Activated B cell treated with CpG ODN at 0.5 μM for 24 hours (primary cell): ENCODE measurements at regions of chr1 and their contacts with region 1.

Region 1: GRCh38 chr1:93846211-93846991 is 32.6 kb downstream of the DNTTIP2 start:
- DNase-seq: peak; percentile 85
- ATAC-seq: peak; percentile 56
- H3K4me3 Mint-ChIP-seq: peak overlapping the region; percentile 93
- H3K27ac Mint-ChIP-seq: peak overlapping the region; percentile 96
- H3K4me1 Mint-ChIP-seq: peaks cover 24% of the 10 kb centered on the region
- H3K27me3 Mint-ChIP-seq: peaks cover 2% of the 10 kb centered on the region
- CTCF ChIP-seq: no peak

Region 2: DNA sequence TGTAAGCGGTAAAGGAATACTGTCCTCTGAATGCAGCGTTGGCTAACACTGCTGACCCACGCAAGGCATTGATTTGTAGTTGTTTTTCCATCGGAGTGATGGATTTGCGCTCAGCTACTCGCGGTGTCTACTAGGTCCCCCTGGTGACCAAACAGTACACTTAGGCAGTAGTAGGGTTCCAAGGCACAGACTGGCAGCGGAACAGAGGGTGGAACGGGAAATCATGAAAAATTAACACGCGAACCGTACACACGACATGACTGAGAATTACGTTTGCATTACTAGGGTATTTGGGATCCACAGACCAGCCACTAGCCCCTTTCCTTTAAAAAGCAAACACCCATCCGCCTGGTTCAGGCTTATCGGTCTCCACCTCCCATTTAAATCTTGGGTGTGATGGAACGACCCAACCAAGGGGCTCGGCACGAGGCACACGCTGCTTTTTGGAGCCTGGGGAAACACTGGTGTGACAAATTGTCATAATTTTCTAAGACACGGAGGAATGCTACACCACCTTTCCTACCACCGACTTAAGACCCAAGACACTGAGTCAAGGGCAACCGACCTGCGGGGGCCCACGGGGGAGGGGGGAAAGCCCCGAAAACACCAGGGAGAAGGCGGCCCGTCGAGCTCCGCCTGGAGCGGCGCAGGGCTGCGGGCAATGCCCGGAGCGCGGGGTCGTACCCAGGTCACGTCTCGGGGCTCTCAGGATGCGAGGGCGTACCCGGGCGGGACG is 885.8 kb before region 1 on chr1:
- CTCF ChIA-PET with region 1: no interaction called
- POLR2A ChIA-PET with region 1: interaction called, 14 read pairs
- intact Hi-C with region 1: loop called (anchors 5 kb)
- DNase-seq: no peak
- ATAC-seq: peak; percentile 49
- H3K4me3 Mint-ChIP-seq: peak overlapping the region; percentile 96
- H3K27ac Mint-ChIP-seq: peak overlapping the region; percentile 98
- H3K4me1 Mint-ChIP-seq: peaks cover 46% of the 10 kb centered on the region
- H3K27me3 Mint-ChIP-seq: no peaks in the 10 kb centered on the region
- CTCF ChIP-seq: no peak

Region 3: DNA sequence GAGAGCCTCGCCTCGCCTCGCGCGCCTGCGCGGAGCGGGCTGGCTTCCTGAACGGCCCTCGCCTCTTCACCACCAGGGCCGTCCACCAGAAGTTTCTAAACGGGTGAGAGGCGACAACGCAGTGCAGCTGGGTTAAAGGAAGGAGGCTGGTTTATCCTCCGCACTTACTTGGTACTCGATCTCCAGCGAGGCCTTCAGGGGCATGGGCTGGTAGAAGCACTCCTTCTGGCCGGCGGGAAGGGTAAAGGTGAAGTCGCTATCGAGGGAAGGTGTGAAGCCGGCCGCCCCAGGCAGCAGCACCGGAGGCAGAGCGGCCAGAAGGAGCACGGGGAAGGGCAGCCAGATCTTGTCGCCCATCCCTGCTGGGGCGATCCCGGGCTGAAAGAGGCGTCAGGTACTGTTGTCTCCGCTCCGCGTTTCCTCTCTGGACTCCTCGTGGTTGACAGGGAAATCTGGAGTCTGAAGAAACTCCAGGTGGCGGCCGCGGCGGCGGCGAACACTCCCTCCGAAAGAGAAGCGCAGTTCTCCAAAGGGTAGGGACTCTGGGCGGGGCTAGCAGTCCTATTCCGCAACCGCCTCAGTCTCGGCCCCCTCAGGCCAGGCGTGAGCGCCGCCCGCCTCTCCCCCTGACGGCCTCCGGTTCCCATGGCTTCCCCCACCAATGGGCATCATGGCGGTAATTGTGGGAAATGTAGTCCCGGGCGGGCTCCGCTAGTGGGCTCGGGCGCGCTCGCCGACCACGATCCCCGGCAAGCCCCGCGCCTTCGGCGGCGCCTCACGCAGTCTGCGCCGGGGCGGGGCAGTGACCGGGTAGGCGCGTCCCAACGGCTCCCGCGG is 666.3 kb before region 1 on chr1 and contains the start of gene TMED5:
- CTCF ChIA-PET with region 1: no interaction called
- POLR2A ChIA-PET with region 1: interaction called, 9 read pairs
- intact Hi-C with region 1: loop called (anchors 1 kb)
- DNase-seq: peak; percentile 93
- ATAC-seq: peak; percentile 84
- H3K4me3 Mint-ChIP-seq: peak within 1 kb of the TSS; percentile 94
- H3K27ac Mint-ChIP-seq: peak within 1 kb of the TSS; percentile 96
- H3K4me1 Mint-ChIP-seq: peaks cover 51% of the 10 kb centered on the region
- H3K27me3 Mint-ChIP-seq: no peaks in the 10 kb centered on the region
- CTCF ChIP-seq: no peak
- total RNA-seq, gene TMED5: 38.7 and 42.3 TPM in 2 replicates

Region 4: GRCh38 chr1:93447516-93448291 is 398.7 kb before region 1 on chr1 and contains the start of gene FNBP1L:
- CTCF ChIA-PET with region 1: interaction called, 3 read pairs
- POLR2A ChIA-PET with region 1: interaction called, 5 read pairs
- intact Hi-C with region 1: loop called (anchors 1 kb)
- DNase-seq: peak; percentile 66
- ATAC-seq: peak; percentile 86
- H3K4me3 Mint-ChIP-seq: peak within 1 kb of the TSS; percentile 96
- H3K27ac Mint-ChIP-seq: no peak within 1 kb of the TSS
- H3K4me1 Mint-ChIP-seq: peaks cover 25% of the 10 kb centered on the region
- H3K27me3 Mint-ChIP-seq: peaks cover 23% of the 10 kb centered on the region
- CTCF ChIP-seq: no peak
- total RNA-seq, gene FNBP1L: 3.3 and 3.4 TPM in 2 replicates

Region 5: GRCh38 chr1:93483200-93483599 is 363.2 kb before region 1 on chr1:
- CTCF ChIA-PET with region 1: no interaction called
- POLR2A ChIA-PET with region 1: no interaction called
- intact Hi-C with region 1: no loop called
- DNase-seq: no peak
- ATAC-seq: no peak
- H3K4me3 Mint-ChIP-seq: no peak overlapping the region
- H3K27ac Mint-ChIP-seq: no peak overlapping the region
- H3K4me1 Mint-ChIP-seq: peaks cover 3% of the 10 kb centered on the region
- H3K27me3 Mint-ChIP-seq: no peaks in the 10 kb centered on the region
- CTCF ChIP-seq: no peak

Region 6: DNA sequence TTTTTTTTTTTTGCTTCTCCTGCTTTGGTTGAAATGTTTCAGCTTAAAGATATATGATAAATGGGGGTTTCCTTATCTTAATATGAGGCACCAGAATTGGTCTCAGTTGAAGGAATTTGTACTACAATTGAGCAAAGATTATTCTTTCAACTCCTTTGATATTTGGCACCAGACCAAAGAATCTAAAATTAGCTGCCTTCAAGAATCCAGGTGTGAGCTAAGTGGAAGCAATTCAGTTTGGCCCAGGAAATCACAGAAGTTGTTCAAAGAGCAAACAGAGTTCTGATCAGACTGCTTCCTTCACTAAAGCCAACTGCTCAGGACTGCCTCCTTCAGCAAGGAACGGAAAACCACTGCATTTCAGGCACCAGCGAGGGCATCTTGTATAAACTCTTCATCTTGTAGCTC is 96.5 kb before region 1 on chr1:
- CTCF ChIA-PET with region 1: interaction called, 5 read pairs
- POLR2A ChIA-PET with region 1: interaction called, 11 read pairs
- intact Hi-C with region 1: loop called (anchors 1 kb)
- DNase-seq: no peak
- ATAC-seq: peak; percentile 62
- H3K4me3 Mint-ChIP-seq: peak overlapping the region; percentile 76
- H3K27ac Mint-ChIP-seq: peak overlapping the region; percentile 94
- H3K4me1 Mint-ChIP-seq: peaks cover 60% of the 10 kb centered on the region
- H3K27me3 Mint-ChIP-seq: no peaks in the 10 kb centered on the region
- CTCF ChIP-seq: no peak

Region 7: GRCh38 chr1:93864175-93864574 is 17.8 kb after region 1 on chr1:
- CTCF ChIA-PET with region 1: no interaction called
- POLR2A ChIA-PET with region 1: no interaction called
- intact Hi-C with region 1: no loop called
- DNase-seq: no peak
- ATAC-seq: no peak
- H3K4me3 Mint-ChIP-seq: no peak overlapping the region
- H3K27ac Mint-ChIP-seq: no peak overlapping the region
- H3K4me1 Mint-ChIP-seq: no peaks in the 10 kb centered on the region
- H3K27me3 Mint-ChIP-seq: no peaks in the 10 kb centered on the region
- CTCF ChIP-seq: no peak

Region 8: DNA sequence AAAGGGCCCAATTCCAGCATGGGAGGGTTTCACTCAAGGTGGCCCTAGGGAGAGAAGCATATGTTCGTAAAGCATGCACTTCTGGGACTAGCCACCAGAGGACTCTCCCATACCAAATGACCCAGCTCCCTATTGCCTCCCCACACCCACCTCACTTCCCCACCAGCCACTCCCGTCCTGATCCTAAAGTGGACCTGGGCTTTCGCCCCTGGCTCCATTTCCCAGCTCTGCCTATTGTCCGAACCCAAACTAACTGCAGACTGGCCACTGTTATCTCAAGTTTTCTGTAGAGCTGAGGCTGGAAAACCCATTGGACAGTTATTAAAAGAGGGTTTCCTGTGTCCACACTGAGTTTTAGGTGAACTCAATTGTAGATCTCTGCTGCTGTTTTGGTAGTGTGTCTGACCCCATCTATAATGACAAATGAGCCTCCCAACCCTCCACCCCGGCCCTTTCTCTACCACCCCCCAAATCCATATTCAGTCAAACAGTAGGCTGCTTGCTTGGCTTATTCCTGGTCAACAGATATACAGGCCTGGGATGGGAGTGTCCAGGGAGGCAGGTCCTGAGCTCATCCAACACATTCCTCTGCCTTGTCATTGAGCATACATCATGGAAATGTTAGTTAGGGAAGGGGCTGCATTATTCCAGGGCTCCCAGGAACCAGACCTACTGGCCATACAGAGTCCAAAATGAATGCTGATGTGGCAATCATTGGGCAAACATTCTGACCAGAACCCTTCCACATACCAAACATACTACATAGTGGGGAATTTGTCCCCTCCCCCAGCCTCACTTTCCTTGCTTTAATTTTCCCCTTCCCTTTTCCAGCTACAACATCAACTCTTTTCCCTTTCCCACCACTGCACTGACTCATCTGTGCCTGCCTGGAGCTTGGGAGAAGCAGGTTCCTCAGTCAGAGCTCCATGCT is 215.4 kb after region 1 on chr1:
- CTCF ChIA-PET with region 1: no interaction called
- POLR2A ChIA-PET with region 1: no interaction called
- intact Hi-C with region 1: no loop called
- DNase-seq: no peak
- ATAC-seq: peak; percentile 47
- H3K4me3 Mint-ChIP-seq: no peak overlapping the region
- H3K27ac Mint-ChIP-seq: no peak overlapping the region
- H3K4me1 Mint-ChIP-seq: no peaks in the 10 kb centered on the region
- H3K27me3 Mint-ChIP-seq: peaks cover 9% of the 10 kb centered on the region
- CTCF ChIP-seq: no peak

Region 9: GRCh38 chr1:94154989-94155388 is 308.6 kb after region 1 on chr1:
- CTCF ChIA-PET with region 1: no interaction called
- POLR2A ChIA-PET with region 1: no interaction called
- intact Hi-C with region 1: no loop called
- DNase-seq: no peak
- ATAC-seq: no peak
- H3K4me3 Mint-ChIP-seq: no peak overlapping the region
- H3K27ac Mint-ChIP-seq: no peak overlapping the region
- H3K4me1 Mint-ChIP-seq: no peaks in the 10 kb centered on the region
- H3K27me3 Mint-ChIP-seq: peaks cover 2% of the 10 kb centered on the region
- CTCF ChIP-seq: no peak

Region 10: GRCh38 chr1:94417978-94418663 is 571.7 kb after region 1 on chr1 and contains the start of gene ABCD3:
- CTCF ChIA-PET with region 1: no interaction called
- POLR2A ChIA-PET with region 1: no interaction called
- intact Hi-C with region 1: loop called (anchors 1 kb)
- DNase-seq: peak; percentile 97
- ATAC-seq: peak; percentile 95
- H3K4me3 Mint-ChIP-seq: no peak within 1 kb of the TSS
- H3K27ac Mint-ChIP-seq: no peak within 1 kb of the TSS
- H3K4me1 Mint-ChIP-seq: peaks cover 17% of the 10 kb centered on the region
- H3K27me3 Mint-ChIP-seq: no peaks in the 10 kb centered on the region
- CTCF ChIP-seq: no peak
- total RNA-seq, gene ABCD3: 20.8 and 23.2 TPM in 2 replicates